Mammary epithelial cell (primary cell): ENCODE measurements at regions of chr12 and their contacts with region 1.

Region 1: GRCh38 chr12:53481957-53482586 is 17.2 kb downstream of the MAP3K12 start:
- DNase-seq: no peak
- H3K4me3 ChIP-seq: no peak overlapping the region
- H3K27ac ChIP-seq: no peak overlapping the region
- H3K4me1 ChIP-seq: peaks cover 17% of the 10 kb centered on the region
- H3K27me3 ChIP-seq: no peaks in the 10 kb centered on the region
- CTCF ChIP-seq: peak in 1 of 2 donors; percentile 21

Region 2: GRCh38 chr12:53231826-53232645 is 250.0 kb before region 1 on chr12 and contains the start of gene RARG:
- CTCF ChIA-PET with region 1: no interaction called
- dilution Hi-C with region 1: no loop called
- in situ Hi-C with region 1: no loop called
- intact Hi-C with region 1: no loop called
- DNase-seq: peak; percentile 77
- H3K4me3 ChIP-seq: peak within 1 kb of the TSS; percentile 77 to 88 (median 80)
- H3K27ac ChIP-seq: peak within 1 kb of the TSS; percentile 67
- H3K4me1 ChIP-seq: peaks cover 58% of the 10 kb centered on the region
- H3K27me3 ChIP-seq: no peaks in the 10 kb centered on the region
- CTCF ChIP-seq: no peak
- total RNA-seq, gene RARG: 33.5 to 79.0 TPM

Region 3: DNA sequence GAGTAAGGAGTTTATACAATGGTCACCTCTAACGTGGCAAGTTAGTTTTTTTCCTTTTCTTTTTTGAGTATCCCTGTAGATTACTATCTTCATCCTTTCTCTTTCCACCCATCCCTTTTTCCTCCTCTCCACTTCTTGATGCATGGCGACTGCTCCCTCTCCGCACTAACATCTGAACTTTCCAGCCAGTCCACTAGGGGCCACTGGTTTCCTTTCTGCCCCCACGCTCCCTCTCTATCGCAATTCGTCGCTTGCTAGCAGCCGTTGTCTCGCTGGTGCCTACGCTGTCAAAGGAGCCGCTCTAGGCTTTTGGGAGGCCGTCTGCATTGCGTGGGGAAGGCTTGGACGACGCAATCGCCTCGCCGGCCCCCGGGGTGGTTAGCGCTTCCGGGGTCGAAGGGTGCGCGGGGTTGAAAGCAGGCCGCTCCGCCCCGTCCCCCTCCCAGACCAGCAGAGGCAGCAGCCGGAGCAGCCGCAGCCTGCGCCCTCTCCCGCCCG is 30.4 kb before region 1 on chr12 and contains the start of gene PCBP2:
- CTCF ChIA-PET with region 1: no interaction called
- dilution Hi-C with region 1: no loop called
- in situ Hi-C with region 1: no loop called
- intact Hi-C with region 1: no loop called
- DNase-seq: peak; percentile 99
- H3K4me3 ChIP-seq: peak within 1 kb of the TSS; percentile 68 to 99 (median 99)
- H3K27ac ChIP-seq: peak within 1 kb of the TSS; percentile 87
- H3K4me1 ChIP-seq: peaks cover 11% of the 10 kb centered on the region
- H3K27me3 ChIP-seq: no peaks in the 10 kb centered on the region
- CTCF ChIP-seq: peak; percentile 92 to 93
- total RNA-seq, gene PCBP2: 187 to 654 TPM

Region 4: DNA sequence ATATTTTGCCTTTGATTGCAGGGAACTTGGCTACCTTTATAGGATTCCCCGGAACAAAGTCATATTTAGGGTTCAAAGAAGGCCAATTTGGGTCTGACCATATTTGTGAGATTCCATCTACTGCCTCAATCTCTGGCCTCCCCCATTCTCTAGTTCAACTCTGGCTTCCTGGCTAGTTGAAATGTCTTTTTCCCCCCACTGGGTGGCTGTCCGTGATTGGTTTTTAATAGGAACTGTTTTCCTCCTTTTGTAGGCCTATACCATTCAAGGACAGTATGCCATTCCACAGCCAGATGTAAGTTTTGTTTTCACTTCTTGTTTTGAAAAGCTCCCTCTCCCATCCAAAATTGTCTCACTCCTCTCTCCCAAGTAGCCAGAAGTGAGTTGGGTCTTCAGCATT is 16.4 kb before region 1 on chr12:
- CTCF ChIA-PET with region 1: no interaction called
- dilution Hi-C with region 1: no loop called
- in situ Hi-C with region 1: no loop called
- intact Hi-C with region 1: loop called (anchors 2 kb)
- DNase-seq: no peak
- H3K4me3 ChIP-seq: no peak overlapping the region
- H3K27ac ChIP-seq: no peak overlapping the region
- H3K4me1 ChIP-seq: no peaks in the 10 kb centered on the region
- H3K27me3 ChIP-seq: no peaks in the 10 kb centered on the region
- CTCF ChIP-seq: no peak

Region 5: DNA sequence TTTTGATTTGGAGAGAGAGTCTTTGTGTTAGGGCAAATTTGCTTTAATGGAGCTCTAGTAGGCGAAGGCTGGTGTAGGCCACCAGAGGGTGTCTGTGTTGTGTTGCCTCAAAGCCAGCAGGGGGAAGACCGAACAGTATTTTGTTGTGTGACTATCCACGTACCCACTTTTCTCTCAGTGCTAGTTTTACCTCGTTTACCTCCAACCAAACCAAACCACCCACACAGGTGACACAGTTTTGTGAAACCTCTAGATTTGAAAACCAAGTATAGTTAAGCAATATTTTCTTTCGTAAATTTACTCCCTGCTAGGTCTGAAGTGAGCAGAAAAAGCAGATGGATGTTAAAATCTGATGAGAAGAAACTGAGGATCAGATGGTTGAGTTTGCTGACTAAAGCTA is 61.5 kb after region 1 on chr12:
- CTCF ChIA-PET with region 1: no interaction called
- dilution Hi-C with region 1: no loop called
- in situ Hi-C with region 1: no loop called
- intact Hi-C with region 1: no loop called
- DNase-seq: peak; percentile 62
- H3K4me3 ChIP-seq: no peak overlapping the region
- H3K27ac ChIP-seq: no peak overlapping the region
- H3K4me1 ChIP-seq: peaks cover 2% of the 10 kb centered on the region
- H3K27me3 ChIP-seq: no peaks in the 10 kb centered on the region
- CTCF ChIP-seq: peak; percentile 80 to 87